ENCODE measurements at regions of chr13 and their contacts with region 1.

Region 1: GRCh38 chr13:50081679-50082425 is 66.6 kb downstream of the KCNRG start:
- DNase-seq: peak; percentile 97 to 99 (median 98)
- ATAC-seq: peak; percentile 69
- H3K4me3 ChIP-seq: peak overlapping the region; percentile 79
- H3K4me3 Mint-ChIP-seq: peak overlapping the region; percentile 95
- H3K27ac ChIP-seq: peak overlapping the region; percentile 61 to 85
- H3K27ac Mint-ChIP-seq: peak overlapping the region; percentile 95
- H3K4me1 ChIP-seq: peaks cover 29% of the 10 kb centered on the region
- H3K4me1 Mint-ChIP-seq: peaks cover 43% of the 10 kb centered on the region
- H3K27me3 ChIP-seq: peaks cover under 1 to 29% of the 10 kb centered on the region in 2 experiments
- H3K27me3 Mint-ChIP-seq: peaks cover 15% of the 10 kb centered on the region
- CTCF ChIP-seq: no peak

Region 2: DNA sequence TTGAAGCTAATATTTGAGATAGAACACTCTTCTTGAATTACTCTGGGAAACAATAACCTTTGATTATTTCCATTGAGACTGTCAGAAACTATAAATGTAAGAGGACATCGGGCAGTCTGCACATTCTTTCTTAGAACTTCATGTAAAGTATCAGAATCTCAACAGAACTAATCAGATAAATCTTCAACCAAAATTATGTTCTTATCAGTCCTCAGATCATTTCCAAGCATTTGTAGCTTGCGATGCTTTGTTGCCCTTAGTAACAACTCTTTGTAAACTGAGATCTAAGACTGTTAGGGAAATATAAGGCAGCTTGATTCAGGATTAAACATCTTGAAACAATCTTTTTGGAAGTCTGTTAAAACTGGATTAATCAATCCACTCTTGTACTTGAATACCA is 1035.8 kb before region 1 on chr13:
- CTCF ChIA-PET with region 1: no interaction called
- POLR2A ChIA-PET with region 1: no interaction called
- intact Hi-C with region 1: no loop called
- DNase-seq: no peak
- ATAC-seq: no peak
- H3K4me3 ChIP-seq: no peak overlapping the region
- H3K4me3 Mint-ChIP-seq: no peak overlapping the region
- H3K27ac ChIP-seq: no peak overlapping the region
- H3K27ac Mint-ChIP-seq: no peak overlapping the region
- H3K4me1 ChIP-seq: no peaks in the 10 kb centered on the region
- H3K4me1 Mint-ChIP-seq: peaks cover 21% of the 10 kb centered on the region
- H3K27me3 ChIP-seq: no peaks in the 10 kb centered on the region
- H3K27me3 Mint-ChIP-seq: no peaks in the 10 kb centered on the region
- CTCF ChIP-seq: no peak

Region 3: DNA sequence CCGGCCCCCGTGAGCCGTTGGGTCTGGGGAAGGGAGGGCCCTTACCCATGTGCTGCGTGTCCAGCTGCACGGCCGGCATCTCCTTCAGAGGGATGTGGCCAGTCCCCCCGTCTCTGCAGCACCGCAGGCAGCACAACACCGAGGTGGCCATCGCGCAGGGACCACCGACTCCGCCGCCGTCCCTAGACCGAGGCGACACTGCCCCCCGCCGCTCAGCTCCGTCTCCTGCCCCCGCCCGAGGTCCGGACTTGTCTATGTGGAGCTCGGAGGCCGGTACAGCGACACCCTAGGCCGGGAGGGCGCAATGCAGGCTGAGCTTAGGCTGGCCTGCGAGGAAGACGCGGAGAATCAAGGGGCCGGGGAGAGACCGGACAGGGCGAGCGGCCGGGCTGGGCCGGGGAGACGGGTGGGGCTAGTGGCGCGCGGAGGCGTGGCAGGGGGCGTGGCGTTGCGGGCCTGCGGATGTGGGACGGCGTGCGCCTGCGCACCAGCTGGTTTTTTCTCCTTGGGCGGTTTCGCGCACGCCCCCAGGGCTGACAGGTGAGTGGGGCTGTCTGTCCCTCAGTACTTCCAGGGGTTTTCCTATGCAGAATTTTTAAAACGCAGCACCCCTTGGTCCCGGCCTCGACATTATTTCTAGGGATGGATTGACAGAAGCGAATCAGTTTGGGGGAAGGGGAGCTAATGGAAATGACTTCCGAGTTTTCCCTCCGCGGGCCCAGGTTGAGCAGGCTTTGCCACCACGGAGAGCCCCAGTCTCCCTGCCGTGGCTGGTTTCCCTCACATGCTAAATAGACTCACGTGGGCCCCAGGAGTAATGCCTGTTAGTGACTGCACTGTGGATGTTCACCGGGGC is 145.5 kb before region 1 on chr13 and contains the start of gene SPRYD7:
- CTCF ChIA-PET with region 1: no interaction called
- POLR2A ChIA-PET with region 1: no interaction called
- intact Hi-C with region 1: loop called (anchors 1 to 5 kb)
- DNase-seq: peak; percentile 82 to 97 (median 94)
- ATAC-seq: peak; percentile 85
- H3K4me3 ChIP-seq: peak within 1 kb of the TSS; percentile 81 to 98
- H3K4me3 Mint-ChIP-seq: peak within 1 kb of the TSS; percentile 88
- H3K27ac ChIP-seq: peak within 1 kb of the TSS; percentile 37 to 44
- H3K27ac Mint-ChIP-seq: peak within 1 kb of the TSS; percentile 81
- H3K4me1 ChIP-seq: peaks cover 14% of the 10 kb centered on the region
- H3K4me1 Mint-ChIP-seq: peaks cover 19% of the 10 kb centered on the region
- H3K27me3 ChIP-seq: no peaks in the 10 kb centered on the region
- H3K27me3 Mint-ChIP-seq: no peaks in the 10 kb centered on the region
- CTCF ChIP-seq: peak; percentile 62
- total RNA-seq, gene SPRYD7: 1.2 to 1.4 TPM

Region 4: GRCh38 chr13:50106559-50106958 is 24.7 kb after region 1 on chr13:
- CTCF ChIA-PET with region 1: interaction called, 12 read pairs
- POLR2A ChIA-PET with region 1: interaction called, 9 read pairs
- intact Hi-C with region 1: loop called (anchors 2 kb)
- DNase-seq: peak in 1 of 9 experiments; percentile 28
- ATAC-seq: peak; percentile 44
- H3K4me3 ChIP-seq: no peak overlapping the region
- H3K4me3 Mint-ChIP-seq: peak overlapping the region; percentile 51
- H3K27ac ChIP-seq: peak overlapping the region in 1 of 2 experiments; percentile 48
- H3K27ac Mint-ChIP-seq: peak overlapping the region; percentile 91
- H3K4me1 ChIP-seq: peaks cover 19% of the 10 kb centered on the region
- H3K4me1 Mint-ChIP-seq: peaks cover 50% of the 10 kb centered on the region
- H3K27me3 ChIP-seq: no peaks in the 10 kb centered on the region
- H3K27me3 Mint-ChIP-seq: no peaks in the 10 kb centered on the region
- CTCF ChIP-seq: no peak

Region 5: DNA sequence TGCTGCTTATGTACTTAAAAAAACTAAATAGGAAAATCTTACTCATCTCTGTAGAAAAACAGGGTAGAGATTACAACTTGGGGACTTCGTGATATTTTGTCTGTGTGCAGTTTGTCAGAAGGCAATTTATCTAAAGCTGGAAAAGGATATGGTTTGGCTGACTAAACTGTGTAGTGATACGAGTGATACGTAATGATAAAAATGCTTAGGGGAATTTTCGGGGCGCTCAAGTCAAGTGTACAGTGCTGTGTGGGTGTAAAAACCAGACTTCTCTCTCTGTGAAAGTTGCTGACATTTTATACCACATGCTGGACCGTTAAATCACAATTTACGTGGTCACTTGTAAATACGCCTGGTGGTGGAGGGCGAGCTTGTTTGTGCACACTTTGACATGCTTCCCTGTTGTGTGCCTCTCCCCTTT is 155.1 kb after region 1 on chr13:
- CTCF ChIA-PET with region 1: no interaction called
- POLR2A ChIA-PET with region 1: no interaction called
- intact Hi-C with region 1: loop called in 1 of 2 experiments (anchors 10 kb)
- DNase-seq: peak in 5 of 9 experiments; percentile 4 to 82 (median 37)
- ATAC-seq: peak; percentile 86
- H3K4me3 ChIP-seq: peak overlapping the region in 1 of 2 experiments; percentile 2
- H3K4me3 Mint-ChIP-seq: peak overlapping the region; percentile 83
- H3K27ac ChIP-seq: peak overlapping the region; percentile 15 to 64
- H3K27ac Mint-ChIP-seq: peak overlapping the region; percentile 75
- H3K4me1 ChIP-seq: peaks cover 4% of the 10 kb centered on the region
- H3K4me1 Mint-ChIP-seq: peaks cover 17% of the 10 kb centered on the region
- H3K27me3 ChIP-seq: no peaks in the 10 kb centered on the region
- H3K27me3 Mint-ChIP-seq: no peaks in the 10 kb centered on the region
- CTCF ChIP-seq: no peak

Region 6: GRCh38 chr13:50531917-50532899 is 450.4 kb after region 1 on chr13:
- CTCF ChIA-PET with region 1: no interaction called
- POLR2A ChIA-PET with region 1: no interaction called
- intact Hi-C with region 1: loop called in 1 of 2 experiments (anchors 2 kb)
- DNase-seq: peak in 2 of 9 experiments; percentile 28 to 37
- ATAC-seq: no peak
- H3K4me3 ChIP-seq: no peak overlapping the region
- H3K4me3 Mint-ChIP-seq: no peak overlapping the region
- H3K27ac ChIP-seq: no peak overlapping the region
- H3K27ac Mint-ChIP-seq: no peak overlapping the region
- H3K4me1 ChIP-seq: no peaks in the 10 kb centered on the region
- H3K4me1 Mint-ChIP-seq: peaks cover 12% of the 10 kb centered on the region
- H3K27me3 ChIP-seq: no peaks in the 10 kb centered on the region
- H3K27me3 Mint-ChIP-seq: no peaks in the 10 kb centered on the region
- CTCF ChIP-seq: peak; percentile 29